Tibial artery (tissue), 4 donors: ENCODE measurements at regions of chr18 and their contacts with region 1.

Region 1: DNA sequence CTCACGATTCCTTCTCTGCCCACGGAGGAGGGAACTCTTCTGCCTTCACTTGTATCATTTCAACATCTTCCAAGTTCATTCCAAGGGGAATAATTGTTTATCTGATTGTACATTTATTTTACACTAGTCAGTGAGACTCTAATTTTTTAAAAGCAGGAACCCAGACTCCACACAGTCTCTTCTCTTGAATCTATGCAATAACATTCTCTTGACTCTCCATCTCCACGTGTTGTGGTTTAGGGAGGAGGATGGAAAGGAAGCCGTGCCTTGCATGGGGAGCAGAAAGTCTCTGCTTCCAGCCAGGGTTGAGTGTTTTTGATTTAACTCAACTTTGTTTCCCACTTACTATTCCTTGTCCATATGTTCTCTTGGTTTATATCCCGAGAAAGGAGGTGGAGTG is 131.1 kb upstream of the RIOK3 start:
- DNase-seq: no peak
- H3K4me3 ChIP-seq: no peak overlapping the region
- H3K27ac ChIP-seq: no peak overlapping the region
- H3K4me1 ChIP-seq: no peaks in the 10 kb centered on the region
- H3K27me3 ChIP-seq: no peaks in the 10 kb centered on the region
- CTCF ChIP-seq: no peak

Region 2: DNA sequence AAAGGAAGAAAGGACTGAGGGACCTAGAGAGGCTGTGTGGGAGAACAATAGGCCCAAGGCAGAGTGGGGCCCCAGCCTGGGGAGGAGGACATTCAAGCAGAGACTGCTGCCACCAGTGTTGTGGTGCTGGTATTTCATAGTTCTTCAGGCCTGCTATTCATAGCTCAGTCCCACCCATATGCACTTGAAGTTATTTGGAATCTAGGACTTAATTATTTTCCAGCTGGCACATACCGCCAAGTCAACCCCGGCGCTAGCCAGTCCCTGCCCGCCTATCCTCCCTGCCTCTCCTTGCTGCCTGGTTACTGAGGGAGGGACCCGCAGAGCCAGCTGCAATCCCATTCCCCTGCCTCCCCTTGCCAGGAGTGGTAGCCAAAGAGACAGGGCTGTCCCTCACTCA is 45.5 kb before region 1 on chr18:
- intact Hi-C with region 1: loop called (anchors 10 kb)
- DNase-seq: no peak
- H3K4me3 ChIP-seq: no peak overlapping the region
- H3K27ac ChIP-seq: peak overlapping the region in 1 of 2 donors; percentile 37
- H3K4me1 ChIP-seq: peaks cover 0 to 27% (median 19%) of the 10 kb centered on the region in 4 donors
- H3K27me3 ChIP-seq: no peaks in the 10 kb centered on the region
- CTCF ChIP-seq: no peak